ENCODE measurements at regions of chr6 and their contacts with region 1.

Region 1: GRCh38 chr6:150617496-150618460 is 18.1 kb downstream of the PLEKHG1 start:
- DNase-seq: no peak
- ATAC-seq: no peak
- H3K4me3 ChIP-seq: no peak overlapping the region
- H3K27ac ChIP-seq: peak overlapping the region in 9 of 12 donors; percentile 12 to 55 (median 45)
- H3K4me1 ChIP-seq: peaks cover 0 to 57% (median 26%) of the 10 kb centered on the region in 12 donors
- H3K27me3 ChIP-seq: no peaks in the 10 kb centered on the region
- CTCF ChIP-seq: no peak
- POLR2A ChIP-seq: no peak

Region 2: GRCh38 chr6:150667977-150668716 is 50.4 kb after region 1 on chr6:
- intact Hi-C with region 1: loop called in 1 of 10 experiments (anchors 10 kb)
- DNase-seq: peak; percentile 84 to 94 (median 90)
- ATAC-seq: peak; percentile 94 to 99 (median 96)
- H3K4me3 ChIP-seq: no peak overlapping the region
- H3K27ac ChIP-seq: peak overlapping the region; percentile 29 to 73 (median 59)
- H3K4me1 ChIP-seq: peaks cover 6 to 49% (median 30%) of the 10 kb centered on the region in 12 donors
- H3K27me3 ChIP-seq: no peaks in the 10 kb centered on the region
- CTCF ChIP-seq: peak in 6 of 12 donors; percentile 9 to 55 (median 24)
- POLR2A ChIP-seq: no peak

Region 3: DNA sequence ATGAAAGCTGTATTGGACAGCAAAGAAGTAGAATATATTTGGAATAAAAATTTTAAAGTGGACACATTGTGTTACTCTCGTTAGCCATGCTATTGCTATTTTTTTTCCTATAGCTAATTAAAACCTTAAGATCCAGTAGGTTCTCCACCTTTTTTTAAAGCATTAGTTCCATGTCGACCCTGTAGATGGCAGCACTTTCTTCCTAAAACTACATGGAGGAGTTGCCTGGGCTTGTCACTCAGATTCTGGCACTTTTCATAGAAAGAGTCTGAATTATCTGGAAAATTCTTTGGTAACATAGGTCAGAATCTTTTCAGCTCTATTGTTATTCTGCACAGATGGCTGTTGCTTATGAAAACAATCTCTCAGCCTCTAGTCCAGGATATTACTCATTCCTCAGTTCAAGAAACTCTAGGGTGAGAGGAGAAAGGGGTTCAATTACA is 1147.7 kb after region 1 on chr6:
- intact Hi-C with region 1: no loop called
- DNase-seq: peak in 4 of 5 donors; percentile 27 to 41 (median 32)
- ATAC-seq: peak in 3 of 4 donors; percentile 61 to 65 (median 61)
- H3K4me3 ChIP-seq: no peak overlapping the region
- H3K27ac ChIP-seq: no peak overlapping the region
- H3K4me1 ChIP-seq: peaks cover 0 to 12% (median 1%) of the 10 kb centered on the region in 12 donors
- H3K27me3 ChIP-seq: no peaks in the 10 kb centered on the region
- CTCF ChIP-seq: peak; percentile 58 to 81 (median 73)
- POLR2A ChIP-seq: no peak

Measured in heart left ventricle (tissue), 16 donors.